ENCODE measurements at regions of chr19 and their contacts with region 1.

Region 1: DNA sequence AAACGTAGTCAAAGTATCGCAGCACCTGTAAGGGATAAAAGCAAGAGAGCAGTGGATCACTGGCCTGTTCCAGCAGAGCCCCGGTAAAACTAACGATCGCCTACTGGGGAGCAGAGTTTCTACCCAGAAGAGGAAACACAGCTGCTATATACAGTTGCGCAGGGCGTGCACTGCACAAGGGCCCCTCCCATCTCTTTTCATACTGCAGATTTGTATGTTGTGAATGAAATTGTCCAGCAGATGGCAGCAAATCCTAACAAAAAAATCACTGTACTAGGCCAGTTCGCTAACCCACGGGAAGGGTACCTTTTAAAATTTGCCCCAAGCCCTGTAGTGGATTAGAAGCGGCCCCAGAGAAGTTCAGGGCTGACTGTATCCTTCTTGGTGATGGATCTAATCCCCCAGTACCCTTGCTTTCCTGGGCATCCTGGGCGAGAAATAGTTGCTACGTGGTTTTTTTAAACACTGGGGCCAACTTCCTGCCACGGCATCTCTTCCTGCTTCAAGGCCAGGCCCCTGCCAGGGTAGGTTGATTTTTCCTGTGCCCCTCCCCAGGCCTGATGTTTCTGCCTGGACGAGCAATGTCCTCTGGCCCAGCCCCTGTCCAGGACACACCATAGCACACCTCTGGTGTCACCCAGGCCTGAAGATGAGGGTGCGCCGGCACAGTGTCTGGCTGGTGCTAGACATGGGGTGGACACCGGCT is 127.0 kb downstream of the IER2 start:
- DNase-seq: peak; percentile 69 to 75 (median 73)
- H3K4me3 ChIP-seq: peak overlapping the region in 1 of 3 experiments; percentile 47
- H3K4me3 Mint-ChIP-seq: peak overlapping the region; percentile 24 to 58
- H3K27ac ChIP-seq: no peak overlapping the region
- H3K27ac Mint-ChIP-seq: peak overlapping the region in 2 of 7 donors; percentile 5 to 49
- H3K4me1 ChIP-seq: peaks cover 4 to 6% of the 10 kb centered on the region in 2 donors
- H3K4me1 Mint-ChIP-seq: peaks cover 10% of the 10 kb centered on the region
- H3K27me3 ChIP-seq: no peaks in the 10 kb centered on the region
- H3K27me3 Mint-ChIP-seq: peaks cover 8 to 12% (median 10%) of the 10 kb centered on the region in 3 donors
- CTCF ChIP-seq: peak; percentile 71

Region 2: DNA sequence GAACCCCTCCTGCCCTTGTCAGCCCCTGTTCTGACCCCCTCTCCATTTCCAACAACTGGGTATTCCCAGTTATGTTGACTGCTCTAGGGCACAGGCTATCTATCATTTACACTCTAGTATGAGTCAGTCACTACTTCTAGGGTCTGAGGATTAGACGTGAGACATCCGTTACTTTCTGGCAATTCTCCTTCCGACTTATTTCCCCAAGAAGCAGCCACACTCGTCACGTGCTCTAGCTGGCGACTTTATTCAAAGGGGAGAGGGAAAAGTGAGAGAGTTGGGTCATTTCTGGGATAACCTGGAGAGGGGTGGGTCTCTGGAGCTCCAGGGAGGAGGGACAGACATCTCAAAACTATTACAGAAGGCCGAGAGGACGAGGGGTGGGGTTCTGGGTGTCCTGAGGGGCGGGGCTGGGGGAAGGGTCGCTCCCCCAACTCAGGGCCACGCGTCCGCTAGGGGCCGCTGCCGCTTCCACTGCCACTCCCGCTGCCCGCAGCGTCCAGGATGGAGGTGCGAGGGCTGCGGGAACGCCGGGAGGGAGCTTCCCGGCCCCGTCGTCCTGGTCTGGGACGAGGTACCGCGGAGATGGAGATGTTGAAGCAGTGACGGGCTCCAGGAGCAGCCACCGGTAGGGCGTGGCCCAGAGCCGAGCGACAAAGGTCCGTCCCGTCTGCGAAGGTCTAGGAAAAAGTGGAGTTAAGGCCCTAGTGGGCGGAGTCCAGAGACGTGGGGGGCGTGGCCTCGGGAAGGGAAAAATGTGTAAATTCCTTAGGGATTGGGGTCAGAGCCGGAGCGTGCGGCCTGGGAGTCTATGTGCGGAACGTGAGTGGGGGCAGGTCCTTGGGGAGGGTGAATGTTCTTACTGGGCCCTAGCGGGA is 451.8 kb before region 1 on chr19:
- intact Hi-C with region 1: no loop called
- DNase-seq: peak in 2 of 3 donors; percentile 22 to 39
- H3K4me3 ChIP-seq: peak overlapping the region in 1 of 3 experiments; percentile 21
- H3K4me3 Mint-ChIP-seq: peak overlapping the region; percentile 20 to 76
- H3K27ac ChIP-seq: no peak overlapping the region
- H3K27ac Mint-ChIP-seq: peak overlapping the region in 1 of 7 donors; percentile 82
- H3K4me1 ChIP-seq: peaks cover 7% of the 10 kb centered on the region in 2 donors
- H3K4me1 Mint-ChIP-seq: peaks cover 14% of the 10 kb centered on the region
- H3K27me3 ChIP-seq: peaks cover 2 to 34% of the 10 kb centered on the region in 2 donors
- H3K27me3 Mint-ChIP-seq: peaks cover 29 to 59% (median 31%) of the 10 kb centered on the region in 3 donors
- CTCF ChIP-seq: peak; percentile 61

Region 3: DNA sequence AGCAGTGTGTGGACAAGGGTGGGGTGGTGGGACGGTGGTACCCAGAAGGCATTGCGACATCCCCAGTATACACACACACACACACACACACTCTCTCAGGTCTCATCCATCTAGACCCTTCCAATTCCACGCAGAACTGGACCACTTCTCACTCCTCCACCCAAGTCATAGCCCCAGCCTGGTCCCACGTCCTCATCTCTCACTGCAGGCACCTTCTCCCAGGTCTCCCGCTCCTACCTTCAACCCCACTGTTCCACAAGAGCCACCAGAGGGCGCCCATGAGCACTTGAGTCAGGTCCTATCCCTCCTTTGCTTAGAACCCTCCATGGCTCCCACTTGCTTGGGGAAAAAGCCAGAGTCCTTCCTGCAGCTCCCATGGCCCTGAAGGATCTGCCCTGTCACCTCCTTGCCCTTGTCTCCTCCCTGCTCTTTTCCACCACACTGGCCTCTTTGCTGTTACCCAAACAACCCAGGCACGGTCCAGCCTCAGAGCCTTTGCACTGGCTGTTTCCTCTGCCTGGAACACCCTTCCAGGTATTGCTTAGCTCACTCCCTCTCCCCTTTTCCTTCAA is 64.4 kb before region 1 on chr19:
- intact Hi-C with region 1: no loop called
- DNase-seq: peak; percentile 57 to 74 (median 58)
- H3K4me3 ChIP-seq: no peak overlapping the region
- H3K4me3 Mint-ChIP-seq: no peak overlapping the region
- H3K27ac ChIP-seq: no peak overlapping the region
- H3K27ac Mint-ChIP-seq: peak overlapping the region in 4 of 7 donors; percentile 38 to 54 (median 49)
- H3K4me1 ChIP-seq: peaks cover 11 to 21% of the 10 kb centered on the region in 2 donors
- H3K4me1 Mint-ChIP-seq: peaks cover 17% of the 10 kb centered on the region
- H3K27me3 ChIP-seq: no peaks in the 10 kb centered on the region
- H3K27me3 Mint-ChIP-seq: peaks cover 2 to 8% (median 5%) of the 10 kb centered on the region in 3 donors
- CTCF ChIP-seq: peak; percentile 74

Region 4: DNA sequence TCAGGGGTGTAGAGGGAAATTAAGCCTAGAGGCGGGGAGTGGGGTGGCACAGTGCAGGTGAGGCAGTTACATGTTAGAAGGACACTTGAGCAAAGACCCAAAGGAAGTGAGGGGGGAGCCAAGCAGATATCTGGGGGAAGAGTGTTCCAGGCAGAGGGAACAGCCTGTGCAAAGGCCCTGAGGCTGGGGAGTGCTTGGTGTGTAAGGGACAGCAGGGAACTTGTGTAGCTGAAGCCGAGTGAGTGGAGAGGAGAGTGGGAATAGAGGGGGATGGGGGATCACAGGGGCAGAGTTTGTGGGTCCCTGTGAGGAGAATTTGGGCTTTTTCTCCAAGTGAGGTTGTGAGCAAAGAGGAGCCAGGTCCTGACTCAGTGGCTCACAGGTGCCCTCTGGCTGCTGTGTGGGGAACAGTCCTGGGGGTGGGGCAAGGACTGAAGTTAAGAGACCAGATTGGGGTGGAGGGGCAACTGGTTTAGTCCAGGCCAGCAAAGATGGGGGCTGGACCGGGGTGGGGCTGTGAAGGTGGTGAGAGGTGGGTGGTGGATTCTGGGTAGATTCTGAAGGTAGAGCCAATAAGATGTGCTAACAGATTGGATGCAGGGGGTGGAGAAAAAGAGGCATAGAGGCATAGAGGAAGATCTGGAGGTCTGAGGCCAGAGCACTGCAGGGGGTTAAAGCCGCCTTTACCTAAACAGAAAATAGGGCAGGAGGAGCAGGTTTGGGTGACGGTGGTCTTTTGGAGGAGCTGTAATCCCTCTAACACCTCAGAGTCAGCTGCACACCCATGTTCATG is 153.7 kb after region 1 on chr19:
- intact Hi-C with region 1: loop called (anchors 2 to 5 kb)
- DNase-seq: peak; percentile 12 to 23 (median 21)
- H3K4me3 ChIP-seq: no peak overlapping the region
- H3K4me3 Mint-ChIP-seq: no peak overlapping the region
- H3K27ac ChIP-seq: no peak overlapping the region
- H3K27ac Mint-ChIP-seq: no peak overlapping the region
- H3K4me1 ChIP-seq: no peaks in the 10 kb centered on the region
- H3K4me1 Mint-ChIP-seq: no peaks in the 10 kb centered on the region
- H3K27me3 ChIP-seq: no peaks in the 10 kb centered on the region
- H3K27me3 Mint-ChIP-seq: peaks cover 3 to 5% (median 3%) of the 10 kb centered on the region in 3 donors
- CTCF ChIP-seq: peak; percentile 58

Region 5: DNA sequence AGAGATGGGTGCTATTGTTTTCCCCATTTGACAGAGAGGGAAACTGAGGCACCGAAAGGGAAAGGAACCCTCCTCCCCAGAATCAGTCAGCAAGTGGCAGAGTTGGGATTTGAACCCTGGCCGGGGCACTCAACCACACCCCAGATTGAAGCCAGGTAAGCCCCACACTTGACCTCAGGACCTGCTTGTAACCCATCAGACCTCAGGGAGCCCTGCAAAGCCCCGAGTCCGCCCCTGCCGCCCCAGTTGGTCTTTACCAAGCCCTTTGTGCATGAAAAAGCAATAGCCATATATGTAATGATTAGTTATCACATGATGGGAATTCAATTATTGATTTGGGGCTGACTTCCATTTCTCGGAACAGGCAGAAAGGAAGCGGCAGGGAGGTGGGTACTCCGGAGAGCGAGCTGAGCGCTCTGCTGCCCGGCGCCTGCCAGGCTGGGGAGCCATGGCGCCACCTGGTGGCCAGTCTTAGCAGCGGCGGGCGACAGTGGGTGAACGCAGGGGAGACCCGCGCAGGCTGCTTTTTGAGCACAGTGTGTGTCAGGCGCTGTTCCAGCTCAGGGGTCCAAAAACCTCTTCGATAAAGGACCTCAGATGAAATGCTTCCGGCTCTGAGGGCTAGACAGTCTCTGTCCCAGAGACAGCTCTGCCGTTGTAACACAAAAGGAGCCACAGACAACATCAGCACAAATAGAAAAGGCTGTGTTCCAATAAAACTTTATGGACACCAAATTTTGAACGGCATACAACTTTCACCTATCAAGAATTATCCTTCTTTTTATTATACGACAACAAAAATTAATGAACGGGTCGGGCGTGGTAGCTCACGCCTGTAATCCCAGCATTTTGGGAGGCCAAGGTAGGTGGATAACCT is 311.9 kb after region 1 on chr19:
- intact Hi-C with region 1: loop called (anchors 1 to 2 kb)
- DNase-seq: peak; percentile 52 to 60 (median 54)
- H3K4me3 ChIP-seq: no peak overlapping the region
- H3K4me3 Mint-ChIP-seq: no peak overlapping the region
- H3K27ac ChIP-seq: no peak overlapping the region
- H3K27ac Mint-ChIP-seq: no peak overlapping the region
- H3K4me1 ChIP-seq: no peaks in the 10 kb centered on the region
- H3K4me1 Mint-ChIP-seq: no peaks in the 10 kb centered on the region
- H3K27me3 ChIP-seq: no peaks in the 10 kb centered on the region
- H3K27me3 Mint-ChIP-seq: peaks cover 11 to 17% (median 11%) of the 10 kb centered on the region in 3 donors
- CTCF ChIP-seq: peak; percentile 99